Activated naive CD8-positive, alpha-beta T cell treated with anti-CD3 and anti-CD28 coated beads, Interleukin-2, amount 10 ng/mL, durations not matched to agents 7 days and 5 days (primary cell): ENCODE measurements at regions of chr7 and their contacts with region 1.

Region 1: GRCh38 chr7:151008511-151009323 is 15.6 kb downstream of the ATG9B start:
- DNase-seq: peak; percentile 87
- ATAC-seq: peak; percentile 51
- H3K4me3 Mint-ChIP-seq: peak overlapping the region; percentile 79
- H3K27ac Mint-ChIP-seq: peak overlapping the region; percentile 89
- H3K4me1 Mint-ChIP-seq: peaks cover 39% of the 10 kb centered on the region
- H3K27me3 Mint-ChIP-seq: no peaks in the 10 kb centered on the region

Region 2: DNA sequence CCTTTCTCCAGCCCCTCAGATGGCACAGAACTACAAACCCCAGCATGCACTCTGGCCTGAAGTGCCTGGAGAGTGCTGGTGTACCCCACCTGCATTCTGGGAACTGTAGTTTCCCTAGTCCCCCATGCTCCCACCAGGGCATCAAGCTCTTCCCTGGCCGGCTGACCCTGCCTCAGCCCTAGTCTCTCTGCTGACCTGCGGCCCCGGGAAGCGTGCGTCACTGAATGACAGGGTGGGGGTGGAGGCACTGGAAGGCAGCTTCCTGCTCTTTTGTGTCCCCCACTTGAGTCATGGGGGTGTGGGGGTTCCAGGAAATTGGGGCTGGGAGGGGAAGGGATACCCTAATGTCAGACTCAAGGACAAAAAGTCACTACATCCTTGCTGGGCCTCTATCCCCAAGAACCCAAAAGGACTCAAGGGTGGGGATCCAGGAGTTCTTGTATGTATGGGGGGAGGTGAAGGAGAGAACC is 15.8 kb before region 1 on chr7:
- POLR2A ChIA-PET with region 1: interaction called, 30 read pairs
- DNase-seq: no peak
- ATAC-seq: peak; percentile 26
- H3K4me3 Mint-ChIP-seq: no peak overlapping the region
- H3K27ac Mint-ChIP-seq: peak overlapping the region; percentile 31
- H3K4me1 Mint-ChIP-seq: peaks cover 20% of the 10 kb centered on the region
- H3K27me3 Mint-ChIP-seq: peaks cover 9% of the 10 kb centered on the region

Region 3: GRCh38 chr7:151091431-151091830 is 82.7 kb after region 1 on chr7:
- POLR2A ChIA-PET with region 1: no interaction called
- DNase-seq: no peak
- ATAC-seq: no peak
- H3K4me3 Mint-ChIP-seq: no peak overlapping the region
- H3K27ac Mint-ChIP-seq: no peak overlapping the region
- H3K4me1 Mint-ChIP-seq: peaks cover 7% of the 10 kb centered on the region
- H3K27me3 Mint-ChIP-seq: peaks cover 6% of the 10 kb centered on the region

Region 4: GRCh38 chr7:151315038-151315655 is 306.4 kb after region 1 on chr7:
- POLR2A ChIA-PET with region 1: no interaction called
- DNase-seq: peak; percentile 60
- ATAC-seq: peak; percentile 95
- H3K4me3 Mint-ChIP-seq: peak overlapping the region; percentile 69
- H3K27ac Mint-ChIP-seq: peak overlapping the region; percentile 80
- H3K4me1 Mint-ChIP-seq: peaks cover 18% of the 10 kb centered on the region
- H3K27me3 Mint-ChIP-seq: peaks cover 1% of the 10 kb centered on the region